ENCODE measurements at regions of chr5 and their contacts with region 1.

Region 1: GRCh38 chr5:69166686-69167492 is at the start of gene CCNB1:
- DNase-seq: peak; percentile 98
- H3K4me3 ChIP-seq: peak within 1 kb of the TSS; percentile 44 to 67 (median 60)
- H3K27ac ChIP-seq: peak within 1 kb of the TSS; percentile 57 to 69 (median 61)
- H3K4me1 ChIP-seq: peaks cover 0 to 17% (median 11%) of the 10 kb centered on the region in 4 donors
- H3K27me3 ChIP-seq: no peaks in the 10 kb centered on the region
- CTCF ChIP-seq: peak in 1 of 4 experiments; percentile 8
- EP300 ChIP-seq: no peak
- POLR2A ChIP-seq: no peak
- total RNA-seq, gene CCNB1: 2.3 to 3.6 (median 2.5) TPM

Region 2: DNA sequence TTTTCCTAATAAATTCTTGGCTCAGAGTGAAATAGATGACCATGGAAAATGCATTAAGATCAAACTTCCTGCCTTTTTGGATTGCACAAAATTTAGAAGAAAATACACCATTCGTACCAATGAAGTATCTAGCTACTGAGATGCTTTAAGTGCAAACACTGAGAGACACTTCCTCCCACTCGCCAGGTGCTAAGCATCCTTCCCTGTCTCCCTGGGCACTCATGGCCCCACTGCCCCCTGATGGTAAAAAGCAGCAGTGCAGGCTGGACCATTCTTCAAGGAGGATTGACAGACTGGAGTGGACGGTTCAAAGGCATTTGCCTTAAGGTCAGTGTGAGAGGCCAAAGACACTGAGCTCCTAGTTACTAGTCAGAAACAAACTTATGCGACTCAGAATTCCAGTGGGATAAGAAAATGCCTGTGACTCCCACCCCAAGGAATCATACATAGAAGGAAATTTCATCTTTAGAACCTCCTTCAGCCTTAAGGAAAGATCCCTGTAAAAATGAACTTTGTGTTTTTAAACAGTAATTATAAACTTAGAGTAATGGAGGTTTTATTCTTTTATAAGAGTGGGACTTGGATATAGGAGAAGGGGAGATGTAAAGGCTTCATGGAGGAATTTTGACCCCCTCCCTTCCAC is 159.0 kb before region 1 on chr5:
- intact Hi-C with region 1: no loop called
- DNase-seq: no peak
- H3K4me3 ChIP-seq: no peak overlapping the region
- H3K27ac ChIP-seq: no peak overlapping the region
- H3K4me1 ChIP-seq: no peaks in the 10 kb centered on the region
- H3K27me3 ChIP-seq: no peaks in the 10 kb centered on the region
- CTCF ChIP-seq: peak; percentile 20 to 59 (median 58)
- EP300 ChIP-seq: no peak
- POLR2A ChIP-seq: no peak

Region 3: DNA sequence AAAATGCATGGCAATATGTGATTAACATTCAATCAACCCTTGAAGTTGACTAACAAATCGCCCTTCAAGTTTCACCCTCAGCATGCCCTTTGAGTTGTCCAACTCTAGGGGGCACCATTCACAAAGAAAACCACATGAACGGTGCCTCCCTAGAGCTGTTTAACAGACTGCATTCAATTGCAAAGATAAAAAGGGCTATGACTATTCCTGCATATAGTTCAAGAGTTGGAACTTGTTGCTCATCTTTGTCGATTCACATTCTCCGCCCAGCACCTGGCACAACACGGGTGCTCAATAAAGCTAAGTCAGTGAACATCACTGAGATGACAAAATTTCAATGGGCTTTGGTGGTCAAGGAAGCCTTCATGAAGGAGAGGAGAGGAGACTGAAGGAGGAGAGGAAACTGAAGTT is 142.6 kb before region 1 on chr5:
- intact Hi-C with region 1: no loop called
- DNase-seq: no peak
- H3K4me3 ChIP-seq: no peak overlapping the region
- H3K27ac ChIP-seq: no peak overlapping the region
- H3K4me1 ChIP-seq: no peaks in the 10 kb centered on the region
- H3K27me3 ChIP-seq: no peaks in the 10 kb centered on the region
- CTCF ChIP-seq: peak in 2 of 4 experiments; percentile 17 to 21
- EP300 ChIP-seq: no peak
- POLR2A ChIP-seq: no peak

Region 4: DNA sequence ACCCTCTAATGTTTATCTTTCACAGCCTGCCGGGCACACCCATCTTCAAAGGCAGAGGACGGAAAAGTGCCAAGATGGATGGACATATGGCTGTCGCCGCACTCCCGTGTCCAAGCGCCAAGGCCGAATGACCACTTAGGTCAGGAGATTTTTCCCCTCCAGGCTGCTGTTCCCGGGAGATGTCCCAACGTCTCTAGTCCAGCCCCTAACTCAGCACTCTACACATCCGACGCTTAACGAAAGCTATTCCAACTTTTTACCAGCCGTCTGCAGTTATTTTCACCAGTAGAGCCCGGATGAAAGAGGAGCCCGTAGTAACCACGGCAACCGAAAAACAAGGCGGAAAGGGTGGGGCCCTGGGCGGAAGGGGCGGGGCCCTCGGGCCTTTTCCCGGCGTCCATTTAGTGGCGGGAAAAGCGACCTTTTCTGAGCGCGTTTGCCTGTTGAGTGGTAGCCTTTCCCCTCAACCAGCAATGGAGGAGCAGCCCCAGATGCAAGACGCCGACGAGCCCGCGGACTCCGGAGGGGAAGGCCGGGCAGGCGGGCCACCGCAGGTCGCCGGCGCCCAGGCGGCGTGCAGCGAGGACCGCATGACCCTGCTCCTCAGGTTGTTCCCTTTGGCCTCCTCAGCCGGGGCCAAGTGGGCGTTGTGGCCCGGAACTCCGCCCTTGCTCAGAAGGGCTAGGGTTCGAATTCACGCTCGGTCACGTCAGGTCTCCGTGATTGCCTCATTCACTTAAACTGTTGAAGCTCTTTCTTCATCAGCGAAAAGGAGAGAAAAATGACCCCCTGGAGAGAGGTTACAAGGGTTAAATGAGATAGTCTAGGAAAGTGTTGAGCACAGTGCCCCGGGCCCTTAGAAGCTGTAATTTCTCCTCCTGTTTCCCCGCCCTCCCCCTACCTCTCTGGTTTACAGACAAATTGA is 22.5 kb after region 1 on chr5 and contains the start of gene CENPH:
- intact Hi-C with region 1: loop called (anchors 1 kb)
- DNase-seq: peak; percentile 93
- H3K4me3 ChIP-seq: peak within 1 kb of the TSS; percentile 60 to 80 (median 70)
- H3K27ac ChIP-seq: peak within 1 kb of the TSS; percentile 56 to 79 (median 76)
- H3K4me1 ChIP-seq: peaks cover 0 to 17% (median 15%) of the 10 kb centered on the region in 4 donors
- H3K27me3 ChIP-seq: no peaks in the 10 kb centered on the region
- CTCF ChIP-seq: no peak
- EP300 ChIP-seq: no peak
- POLR2A ChIP-seq: no peak
- total RNA-seq, gene CENPH: 1.3 to 3.8 (median 2.6) TPM

Region 5: GRCh38 chr5:69234457-69235268 is 67.8 kb after region 1 on chr5 and contains the start of gene CDK7:
- intact Hi-C with region 1: loop called (anchors 2 kb)
- DNase-seq: peak; percentile 95
- H3K4me3 ChIP-seq: peak within 1 kb of the TSS; percentile 71 to 92 (median 74)
- H3K27ac ChIP-seq: peak within 1 kb of the TSS; percentile 81 to 89 (median 84)
- H3K4me1 ChIP-seq: peaks cover 0 to 31% (median 24%) of the 10 kb centered on the region in 4 donors
- H3K27me3 ChIP-seq: no peaks in the 10 kb centered on the region
- CTCF ChIP-seq: no peak
- EP300 ChIP-seq: no peak
- POLR2A ChIP-seq: no peak
- total RNA-seq, gene CDK7: 7.2 to 18.5 (median 13.8) TPM